T-cell (primary cell): ENCODE measurements at regions of chr19 and their contacts with region 1.

Region 1: DNA sequence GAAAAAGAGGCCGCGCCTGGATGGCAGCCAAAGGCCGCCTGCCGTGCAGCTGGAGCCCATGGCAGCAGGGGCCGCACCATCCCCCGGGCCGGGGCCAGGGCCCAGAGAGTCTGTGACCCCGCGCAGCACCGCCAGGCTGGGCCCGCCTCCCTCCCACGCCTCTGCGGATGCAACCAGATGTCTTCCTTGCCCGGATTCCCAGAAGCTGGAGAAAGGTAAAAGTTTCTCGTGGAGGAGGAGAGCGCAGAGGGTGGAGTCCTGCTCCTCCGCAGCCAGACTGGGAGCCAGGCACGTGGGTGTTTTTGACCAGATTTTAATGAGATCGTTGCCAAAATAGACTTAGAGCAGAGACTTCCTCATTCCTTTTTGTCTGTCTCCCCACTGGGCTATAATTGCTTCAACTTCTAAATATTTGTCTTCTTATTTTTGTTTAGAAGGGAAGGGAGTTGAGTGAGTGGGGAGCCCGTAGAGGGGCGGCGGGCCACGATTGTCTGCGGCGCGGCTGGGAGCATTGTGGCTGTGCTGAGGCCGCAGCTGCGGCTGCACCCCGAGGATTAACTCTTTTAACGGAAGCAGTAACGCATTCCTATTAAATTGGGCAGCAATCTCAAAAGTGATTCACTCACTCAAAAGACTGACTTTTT is 22.8 kb upstream of the NDUFS7 start:
- DNase-seq: no peak
- ATAC-seq: no peak
- H3K4me3 ChIP-seq: no peak overlapping the region
- H3K4me3 Mint-ChIP-seq: no peak overlapping the region
- H3K27ac ChIP-seq: no peak overlapping the region
- H3K27ac Mint-ChIP-seq: no peak overlapping the region
- H3K4me1 ChIP-seq: peaks cover 13 to 23% of the 10 kb centered on the region in 2 experiments
- H3K4me1 Mint-ChIP-seq: peaks cover 29 to 37% (median 35%) of the 10 kb centered on the region in 3 donors
- H3K27me3 ChIP-seq: no peaks in the 10 kb centered on the region
- H3K27me3 Mint-ChIP-seq: no peaks in the 10 kb centered on the region

Region 2: DNA sequence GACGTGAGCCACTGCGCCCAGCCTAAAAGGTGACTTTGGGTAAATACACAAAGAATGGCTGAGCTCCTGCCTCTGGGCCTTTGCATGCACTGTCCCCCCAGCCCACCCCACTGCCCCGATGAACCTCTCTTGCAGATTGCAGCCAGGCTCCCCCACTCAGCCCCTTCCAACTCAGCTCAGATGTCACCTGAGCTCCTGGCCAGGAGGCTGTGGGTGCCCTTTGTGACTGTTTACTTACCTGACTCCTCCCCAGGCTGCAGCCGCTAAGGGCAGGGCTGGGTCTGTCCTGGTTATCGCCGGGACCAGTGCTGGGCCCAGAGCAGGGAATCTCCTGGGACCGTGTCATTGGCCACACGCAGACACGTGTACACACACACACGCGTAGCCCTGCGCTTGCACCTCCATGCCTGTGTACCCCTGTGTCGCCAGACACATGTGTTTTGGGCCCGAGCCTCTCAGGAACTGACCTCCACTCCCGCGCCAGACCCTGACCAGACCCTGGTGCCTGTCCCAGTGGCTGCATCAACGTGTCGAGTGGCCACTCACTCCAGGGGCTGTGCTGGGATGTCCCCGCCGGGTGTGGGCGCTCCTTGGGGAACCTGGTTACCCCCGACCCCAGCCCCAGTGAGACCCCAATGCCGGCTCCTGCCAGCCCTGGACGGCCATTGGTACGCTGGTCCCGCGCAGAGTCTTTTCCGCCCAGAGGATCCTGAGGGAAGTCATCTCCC is 56.6 kb before region 1 on chr19:
- CTCF ChIA-PET with region 1: no interaction called
- POLR2A ChIA-PET with region 1: interaction called in 1 of 2 experiments, 15 read pairs
- DNase-seq: no peak
- ATAC-seq: no peak
- H3K4me3 ChIP-seq: no peak overlapping the region
- H3K4me3 Mint-ChIP-seq: no peak overlapping the region
- H3K27ac ChIP-seq: no peak overlapping the region
- H3K27ac Mint-ChIP-seq: no peak overlapping the region
- H3K4me1 ChIP-seq: no peaks in the 10 kb centered on the region
- H3K4me1 Mint-ChIP-seq: no peaks in the 10 kb centered on the region
- H3K27me3 ChIP-seq: peaks cover 0 to 5% of the 10 kb centered on the region in 2 experiments
- H3K27me3 Mint-ChIP-seq: no peaks in the 10 kb centered on the region

Region 3: DNA sequence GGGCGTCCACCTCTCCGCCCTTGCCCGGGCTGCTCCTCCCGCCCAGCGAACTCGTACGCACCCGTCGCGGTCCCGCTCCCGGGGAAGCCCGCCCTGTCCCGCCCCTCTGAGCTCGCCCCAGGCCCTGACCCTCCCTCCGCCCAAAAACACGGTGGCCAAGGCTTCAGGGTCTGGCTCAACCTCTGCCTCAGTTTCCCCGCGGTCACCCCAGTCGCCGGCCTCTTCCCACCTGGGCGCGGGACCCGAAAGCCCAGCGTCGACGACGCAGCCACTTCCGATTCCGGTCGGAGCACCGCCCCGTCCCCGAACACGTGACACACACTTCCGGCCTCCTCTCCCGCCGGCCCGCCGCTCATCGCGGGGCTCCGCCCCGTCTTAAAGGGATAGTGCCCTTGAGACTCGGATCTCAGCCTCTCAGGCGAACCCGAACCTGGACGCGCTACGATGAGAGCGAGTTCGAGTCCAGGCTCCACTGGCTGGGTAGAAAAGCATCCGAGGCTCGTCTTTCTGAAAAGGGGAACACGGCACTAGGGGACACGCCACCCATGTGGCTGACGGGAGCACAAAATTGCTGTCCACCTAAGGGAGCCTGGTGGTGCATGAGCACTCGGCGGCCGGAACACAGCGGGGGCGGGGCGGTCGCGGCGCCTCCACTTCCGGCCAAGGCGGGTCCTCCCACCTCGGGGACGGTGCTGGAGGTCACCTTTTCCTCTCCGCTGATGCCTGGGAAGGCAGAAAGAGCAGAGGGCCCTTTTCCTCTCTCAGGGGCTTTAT is 118.2 kb after region 1 on chr19 and contains the start of gene C19orf25:
- CTCF ChIA-PET with region 1: no interaction called
- POLR2A ChIA-PET with region 1: no interaction called
- DNase-seq: peak; percentile 78 to 93 (median 88)
- ATAC-seq: peak; percentile 94 to 99 (median 96)
- H3K4me3 ChIP-seq: peak within 1 kb of the TSS; percentile 72 to 89
- H3K4me3 Mint-ChIP-seq: peak within 1 kb of the TSS; percentile 94 to 99 (median 98)
- H3K27ac ChIP-seq: peak within 1 kb of the TSS; percentile 70
- H3K27ac Mint-ChIP-seq: peak within 1 kb of the TSS; percentile 96 to 98
- H3K4me1 ChIP-seq: peaks cover 4 to 32% of the 10 kb centered on the region in 2 experiments
- H3K4me1 Mint-ChIP-seq: peaks cover 16 to 20% (median 20%) of the 10 kb centered on the region in 3 donors
- H3K27me3 ChIP-seq: no peaks in the 10 kb centered on the region
- H3K27me3 Mint-ChIP-seq: no peaks in the 10 kb centered on the region
- total RNA-seq, gene C19orf25: 30.8 to 76.2 (median 71.4) TPM